ENCODE measurements at regions of chr5 and their contacts with region 1.

Region 1: GRCh38 chr5:100517301-100517974 is 17.7 kb upstream of the FAM174A start:
- DNase-seq: peak; percentile 95
- H3K4me3 Mint-ChIP-seq: peak overlapping the region; percentile 19
- H3K27ac Mint-ChIP-seq: peak overlapping the region; percentile 61
- H3K4me1 Mint-ChIP-seq: peaks cover 24% of the 10 kb centered on the region
- H3K27me3 Mint-ChIP-seq: no peaks in the 10 kb centered on the region
- CTCF ChIP-seq: no peak

Region 2: GRCh38 chr5:100505984-100506670 is 11.3 kb before region 1 on chr5:
- CTCF ChIA-PET with region 1: no interaction called
- POLR2A ChIA-PET with region 1: interaction called, 15 read pairs
- intact Hi-C with region 1: no loop called
- DNase-seq: peak; percentile 95
- H3K4me3 Mint-ChIP-seq: peak overlapping the region; percentile 47
- H3K27ac Mint-ChIP-seq: peak overlapping the region; percentile 90
- H3K4me1 Mint-ChIP-seq: peaks cover 20% of the 10 kb centered on the region
- H3K27me3 Mint-ChIP-seq: no peaks in the 10 kb centered on the region
- CTCF ChIP-seq: no peak

Region 3: DNA sequence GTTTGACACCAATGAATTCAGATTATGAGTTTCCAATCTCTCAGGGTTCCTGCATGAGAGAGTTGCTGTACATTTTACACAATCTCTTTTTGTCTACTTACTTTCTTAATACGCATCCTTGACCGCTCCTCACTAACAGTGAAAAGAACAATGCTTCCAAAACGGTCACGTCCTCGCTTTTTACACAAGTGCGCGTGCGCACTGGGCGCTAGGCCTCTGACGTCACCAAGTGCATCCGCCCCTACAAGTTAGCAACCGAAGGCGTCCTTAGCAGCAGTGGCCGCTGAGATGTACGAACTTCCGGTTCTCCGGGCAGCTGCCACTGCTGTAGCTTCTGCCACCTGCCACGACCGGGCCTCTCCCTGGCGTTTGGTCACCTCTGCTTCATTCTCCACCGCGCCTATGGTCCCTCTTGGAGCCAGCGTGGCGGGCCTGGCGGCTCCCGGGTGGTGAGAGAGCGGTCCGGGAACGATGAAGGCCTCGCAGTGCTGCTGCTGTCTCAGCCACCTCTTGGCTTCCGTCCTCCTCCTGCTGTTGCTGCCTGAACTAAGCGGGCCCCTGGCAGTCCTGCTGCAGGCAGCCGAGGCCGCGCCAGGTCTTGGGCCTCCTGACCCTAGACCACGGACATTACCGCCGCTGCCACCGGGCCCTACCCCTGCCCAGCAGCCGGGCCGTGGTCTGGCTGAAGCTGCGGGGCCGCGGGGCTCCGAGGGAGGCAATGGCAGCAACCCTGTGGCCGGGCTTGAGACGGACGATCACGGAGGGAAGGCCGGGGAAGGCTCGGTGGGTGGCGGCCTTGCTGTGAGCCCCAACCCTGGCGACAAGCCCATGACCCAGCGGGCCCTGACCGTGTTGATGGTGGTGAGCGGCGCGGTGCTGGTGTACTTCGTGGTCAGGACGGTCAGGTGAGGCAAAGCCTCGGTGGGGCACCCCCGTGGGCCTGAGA is 17.9 kb after region 1 on chr5 and contains the start of gene FAM174A:
- CTCF ChIA-PET with region 1: interaction called, 7 read pairs
- POLR2A ChIA-PET with region 1: interaction called, 27 read pairs
- intact Hi-C with region 1: no loop called
- DNase-seq: peak; percentile 97
- H3K4me3 Mint-ChIP-seq: peak within 1 kb of the TSS; percentile 81
- H3K27ac Mint-ChIP-seq: peak within 1 kb of the TSS; percentile 92
- H3K4me1 Mint-ChIP-seq: peaks cover 25% of the 10 kb centered on the region
- H3K27me3 Mint-ChIP-seq: no peaks in the 10 kb centered on the region
- CTCF ChIP-seq: no peak
- total RNA-seq, gene FAM174A: 9.7 and 15.4 TPM in 2 replicates

Region 4: GRCh38 chr5:100542086-100542485 is 24.6 kb after region 1 on chr5:
- CTCF ChIA-PET with region 1: interaction called, 7 read pairs
- POLR2A ChIA-PET with region 1: interaction called, 13 read pairs
- intact Hi-C with region 1: no loop called
- DNase-seq: peak; percentile 16
- H3K4me3 Mint-ChIP-seq: no peak overlapping the region
- H3K27ac Mint-ChIP-seq: peak overlapping the region; percentile 40
- H3K4me1 Mint-ChIP-seq: peaks cover 38% of the 10 kb centered on the region
- H3K27me3 Mint-ChIP-seq: no peaks in the 10 kb centered on the region
- CTCF ChIP-seq: no peak

Measured in MCF 10A (cell line).